T-cell (primary cell): ENCODE measurements at regions of chr1 and their contacts with region 1.

Region 1: GRCh38 chr1:24704411-24705259 is 40.6 kb upstream of the CLIC4 start:
- DNase-seq: no peak
- ATAC-seq: no peak
- H3K4me3 ChIP-seq: peak overlapping the region in 1 of 2 donors; percentile 55
- H3K4me3 Mint-ChIP-seq: no peak overlapping the region
- H3K27ac ChIP-seq: no peak overlapping the region
- H3K27ac Mint-ChIP-seq: no peak overlapping the region
- H3K4me1 ChIP-seq: peaks cover 0 to 7% of the 10 kb centered on the region in 2 experiments
- H3K4me1 Mint-ChIP-seq: peaks cover 8 to 19% (median 12%) of the 10 kb centered on the region in 3 donors
- H3K27me3 ChIP-seq: peaks cover 0 to 16% of the 10 kb centered on the region in 2 experiments
- H3K27me3 Mint-ChIP-seq: peaks cover 0 to 2% of the 10 kb centered on the region in 2 donors

Region 2: DNA sequence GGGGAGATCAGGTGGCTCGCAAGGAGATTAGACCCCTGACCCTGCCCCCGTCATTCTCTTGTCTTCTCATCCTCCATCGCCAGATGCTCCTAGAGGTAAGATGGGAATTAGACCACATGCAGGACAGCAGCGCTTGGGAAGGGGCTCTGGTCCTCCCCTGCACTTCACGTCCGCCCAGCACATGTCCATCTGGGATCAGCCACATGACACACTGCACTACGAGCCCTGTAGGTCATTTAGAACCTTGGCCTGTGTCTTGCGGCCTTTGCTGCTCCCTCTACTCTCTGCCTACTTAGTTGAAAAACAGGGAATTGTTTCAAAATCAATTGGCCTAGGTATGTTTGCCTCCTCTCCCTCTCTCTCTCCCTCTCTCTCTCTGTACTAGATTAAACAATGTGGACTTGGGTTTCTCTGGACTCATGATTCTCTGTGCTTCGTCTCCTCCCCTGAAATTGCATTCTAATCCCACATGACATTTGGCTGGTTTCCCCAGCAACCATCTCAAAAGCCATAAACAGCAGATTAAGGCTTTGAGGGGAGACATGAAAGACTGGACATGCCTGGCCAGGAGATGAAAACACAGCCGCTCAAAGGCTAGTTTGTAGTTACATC is 152.6 kb before region 1 on chr1:
- CTCF ChIA-PET with region 1: no interaction called
- POLR2A ChIA-PET with region 1: no interaction called
- DNase-seq: no peak
- ATAC-seq: no peak
- H3K4me3 ChIP-seq: no peak overlapping the region
- H3K4me3 Mint-ChIP-seq: no peak overlapping the region
- H3K27ac ChIP-seq: no peak overlapping the region
- H3K27ac Mint-ChIP-seq: no peak overlapping the region
- H3K4me1 ChIP-seq: peaks cover 0 to 15% of the 10 kb centered on the region in 2 experiments
- H3K4me1 Mint-ChIP-seq: peaks cover 16 to 19% (median 17%) of the 10 kb centered on the region in 3 donors
- H3K27me3 ChIP-seq: peaks cover 0 to 27% of the 10 kb centered on the region in 2 experiments
- H3K27me3 Mint-ChIP-seq: peaks cover 0 to 10% of the 10 kb centered on the region in 2 donors

Region 3: DNA sequence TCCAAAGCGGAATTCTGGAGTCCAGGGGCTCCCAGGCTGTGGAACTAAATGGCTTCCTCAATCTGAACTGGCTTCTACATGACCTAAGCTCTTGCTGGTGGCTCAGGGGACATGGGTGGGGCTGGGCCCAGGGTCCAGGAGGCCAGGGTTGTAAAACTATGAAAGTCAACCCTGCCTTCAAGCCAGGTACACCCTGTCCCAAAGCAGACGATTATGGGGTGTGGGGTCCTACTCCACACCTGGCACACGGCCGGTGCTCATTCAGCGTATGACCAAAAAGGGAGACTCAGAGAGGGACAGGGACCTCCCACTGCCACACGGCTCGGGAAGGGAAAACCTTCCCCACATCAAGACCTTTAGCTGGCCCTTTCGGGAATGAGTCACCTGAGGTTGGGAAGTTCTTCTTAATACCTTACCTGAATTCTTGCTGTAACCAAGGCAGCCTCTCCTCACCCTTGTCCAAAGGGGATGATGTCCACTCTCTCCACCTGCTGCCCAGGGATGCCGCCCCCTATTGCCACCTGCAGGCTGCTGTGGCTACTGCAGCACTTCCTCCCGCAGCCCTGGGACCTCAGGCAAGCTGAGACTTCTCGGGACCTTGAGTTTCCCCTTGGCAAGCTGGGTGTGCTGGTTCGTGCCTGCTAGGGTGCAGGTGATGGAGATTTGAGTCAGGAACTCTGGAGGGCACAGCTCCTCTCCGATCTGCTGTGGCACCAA is 193.3 kb after region 1 on chr1:
- CTCF ChIA-PET with region 1: no interaction called
- POLR2A ChIA-PET with region 1: interaction called in 1 of 2 experiments, 12 read pairs
- DNase-seq: peak in 20 of 35 experiments; percentile 27 to 70 (median 39)
- ATAC-seq: peak; percentile 48 to 59 (median 55)
- H3K4me3 ChIP-seq: no peak overlapping the region
- H3K4me3 Mint-ChIP-seq: no peak overlapping the region
- H3K27ac ChIP-seq: peak overlapping the region; percentile 18
- H3K27ac Mint-ChIP-seq: peak overlapping the region; percentile 36 to 48
- H3K4me1 ChIP-seq: peaks cover 0 to 62% of the 10 kb centered on the region in 2 experiments
- H3K4me1 Mint-ChIP-seq: peaks cover 30 to 41% (median 35%) of the 10 kb centered on the region in 3 donors
- H3K27me3 ChIP-seq: no peaks in the 10 kb centered on the region
- H3K27me3 Mint-ChIP-seq: no peaks in the 10 kb centered on the region